GM12878 (cell line): ENCODE measurements at regions of chr15 and their contacts with region 1.

Region 1: DNA sequence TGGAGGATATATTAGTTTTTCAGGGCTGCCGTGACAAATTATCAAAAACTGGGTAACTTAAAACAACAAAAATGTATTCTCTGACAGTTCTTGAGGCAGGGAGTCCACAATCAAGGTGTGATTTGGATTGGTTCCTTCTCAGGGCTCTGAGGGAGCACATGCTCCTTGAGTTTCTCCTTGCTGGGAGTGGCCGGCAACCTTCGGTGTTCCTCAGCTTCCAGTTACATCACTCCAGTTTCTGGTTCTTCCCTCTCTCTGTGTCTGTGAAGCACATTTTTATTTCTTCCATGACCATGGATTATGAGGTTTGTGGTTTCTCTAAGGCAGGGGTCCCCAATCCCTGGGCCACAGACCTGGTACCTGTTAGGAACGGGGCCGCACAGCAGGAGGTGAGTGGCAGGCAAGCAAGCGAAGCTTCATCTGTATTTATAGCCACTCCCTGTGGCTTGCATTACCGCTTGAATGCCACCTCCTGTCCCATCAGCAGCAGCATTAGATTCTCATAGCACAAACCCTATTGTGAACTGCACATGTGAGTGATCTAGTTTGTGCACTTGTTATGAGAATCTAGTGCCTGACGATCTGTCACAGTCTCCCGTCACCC is 24.3 kb downstream of the LRRC28 start:
- DNase-seq: no peak
- ATAC-seq: peak; percentile 38
- H3K4me3 ChIP-seq: no peak overlapping the region
- H3K27ac ChIP-seq: no peak overlapping the region
- H3K4me1 ChIP-seq: no peaks in the 10 kb centered on the region
- H3K27me3 ChIP-seq: no peaks in the 10 kb centered on the region
- CTCF ChIP-seq: no peak
- EP300 ChIP-seq: no peak
- POLR2A ChIP-seq: no peak
- RAD21 ChIP-seq: no peak

Region 2: DNA sequence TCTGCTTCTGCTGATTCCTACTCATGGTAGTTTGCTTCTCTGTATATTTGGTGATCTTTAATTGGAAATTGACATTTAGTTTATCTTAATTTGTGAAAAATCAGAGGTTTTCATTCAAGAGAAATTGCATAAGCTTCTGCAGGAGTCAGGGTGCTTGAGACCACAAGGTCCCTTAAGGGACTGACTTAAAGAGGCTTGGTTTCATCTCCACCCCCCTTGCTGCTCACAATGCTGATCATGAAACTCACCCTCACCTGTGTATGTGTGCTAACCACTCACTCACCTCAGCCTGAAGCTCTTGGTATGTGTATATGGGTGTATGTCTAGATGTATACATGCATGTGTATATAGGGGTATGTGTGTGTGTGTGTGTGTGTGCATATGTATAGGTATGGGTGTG is 279.5 kb before region 1 on chr15:
- CTCF ChIA-PET with region 1: no interaction called
- POLR2A ChIA-PET with region 1: no interaction called
- RAD21 ChIA-PET with region 1: no interaction called
- SMC1A ChIA-PET with region 1: no interaction called
- in situ Hi-C with region 1: no loop called
- intact Hi-C with region 1: no loop called
- DNase-seq: no peak
- ATAC-seq: peak; percentile 79
- H3K4me3 ChIP-seq: no peak overlapping the region
- H3K27ac ChIP-seq: no peak overlapping the region
- H3K4me1 ChIP-seq: no peaks in the 10 kb centered on the region
- H3K27me3 ChIP-seq: no peaks in the 10 kb centered on the region
- CTCF ChIP-seq: no peak
- EP300 ChIP-seq: no peak
- POLR2A ChIP-seq: no peak
- RAD21 ChIP-seq: no peak

Region 3: DNA sequence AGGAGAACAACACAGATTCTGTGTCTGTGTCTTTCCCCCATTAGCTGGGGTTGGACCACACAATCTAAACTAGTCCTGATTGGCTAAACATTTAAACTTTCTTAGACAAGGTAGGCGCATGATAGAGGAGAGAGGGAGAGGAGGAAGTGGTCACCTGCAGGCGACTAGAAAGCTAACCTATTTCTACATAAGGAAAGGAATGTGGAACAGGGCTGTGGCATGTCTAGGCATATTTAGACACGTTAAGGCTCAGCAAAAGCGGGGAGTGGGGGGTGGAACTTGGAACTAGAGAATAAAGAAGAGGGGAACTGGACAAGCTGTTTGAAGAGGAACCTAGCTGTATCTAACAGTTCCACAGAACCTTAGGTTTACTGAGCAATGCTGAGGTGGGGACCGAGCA is 11.5 kb before region 1 on chr15:
- CTCF ChIA-PET with region 1: interaction called, 37 read pairs
- POLR2A ChIA-PET with region 1: no interaction called
- RAD21 ChIA-PET with region 1: interaction called, 9 read pairs
- SMC1A ChIA-PET with region 1: interaction called, 30 read pairs
- in situ Hi-C with region 1: no loop called
- intact Hi-C with region 1: no loop called
- DNase-seq: no peak
- ATAC-seq: no peak
- H3K4me3 ChIP-seq: no peak overlapping the region
- H3K27ac ChIP-seq: no peak overlapping the region
- H3K4me1 ChIP-seq: no peaks in the 10 kb centered on the region
- H3K27me3 ChIP-seq: no peaks in the 10 kb centered on the region
- CTCF ChIP-seq: no peak
- EP300 ChIP-seq: no peak
- POLR2A ChIP-seq: no peak
- RAD21 ChIP-seq: no peak

Region 4: DNA sequence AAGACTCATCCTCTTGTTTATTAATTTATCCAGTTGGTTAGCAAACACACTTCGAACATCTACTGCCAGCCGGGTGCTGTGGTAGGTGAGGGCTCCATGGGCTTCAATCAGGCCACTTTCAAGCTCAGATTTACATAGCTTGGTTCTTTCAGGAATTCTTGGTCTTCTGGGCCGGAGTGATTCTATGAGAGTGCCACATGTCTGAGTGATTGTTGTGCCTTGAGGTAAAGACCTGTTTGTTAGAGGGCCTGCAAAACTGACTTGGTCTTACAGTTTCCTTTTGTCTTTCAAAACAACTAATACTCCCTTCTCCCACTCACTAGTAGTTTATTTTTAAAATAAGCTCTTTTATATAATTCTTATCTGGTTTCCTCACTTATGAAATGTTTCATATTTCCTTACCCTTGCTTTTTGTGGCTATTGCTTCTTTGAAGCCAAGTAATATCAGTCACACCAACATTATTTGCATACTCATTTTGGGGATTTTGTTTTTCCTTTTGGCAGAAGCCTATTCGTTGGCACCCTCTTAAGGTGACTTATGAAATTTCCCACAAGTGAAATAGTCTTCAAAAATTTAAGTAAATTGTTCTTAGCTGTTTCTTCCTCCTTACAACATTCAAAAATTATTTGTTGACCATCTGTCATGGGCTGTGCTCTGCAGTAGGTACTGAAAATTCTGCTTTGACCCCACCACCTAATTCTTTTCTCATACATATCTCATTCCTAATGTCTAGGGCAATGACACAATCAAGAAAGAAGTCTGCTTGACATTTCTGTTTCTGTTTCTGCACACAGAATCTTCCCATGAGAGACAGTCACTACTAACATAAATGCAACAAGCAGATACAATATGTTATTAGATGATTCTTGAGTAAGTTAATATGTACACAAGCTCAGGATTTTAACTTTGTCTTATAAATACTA is 95.8 kb after region 1 on chr15:
- CTCF ChIA-PET with region 1: interaction called, 30 read pairs
- POLR2A ChIA-PET with region 1: no interaction called
- RAD21 ChIA-PET with region 1: interaction called, 21 read pairs
- SMC1A ChIA-PET with region 1: interaction called, 27 read pairs
- in situ Hi-C with region 1: no loop called
- intact Hi-C with region 1: no loop called
- DNase-seq: peak; percentile 63
- ATAC-seq: peak; percentile 92
- H3K4me3 ChIP-seq: no peak overlapping the region
- H3K27ac ChIP-seq: peak overlapping the region; percentile 71
- H3K4me1 ChIP-seq: peaks cover 14% of the 10 kb centered on the region
- H3K27me3 ChIP-seq: no peaks in the 10 kb centered on the region
- CTCF ChIP-seq: peak; percentile 12 to 52 (median 25); a peak in 3 of 6 replicates
- EP300 ChIP-seq: no peak
- POLR2A ChIP-seq: no peak
- RAD21 ChIP-seq: peak; percentile 77

Region 5: DNA sequence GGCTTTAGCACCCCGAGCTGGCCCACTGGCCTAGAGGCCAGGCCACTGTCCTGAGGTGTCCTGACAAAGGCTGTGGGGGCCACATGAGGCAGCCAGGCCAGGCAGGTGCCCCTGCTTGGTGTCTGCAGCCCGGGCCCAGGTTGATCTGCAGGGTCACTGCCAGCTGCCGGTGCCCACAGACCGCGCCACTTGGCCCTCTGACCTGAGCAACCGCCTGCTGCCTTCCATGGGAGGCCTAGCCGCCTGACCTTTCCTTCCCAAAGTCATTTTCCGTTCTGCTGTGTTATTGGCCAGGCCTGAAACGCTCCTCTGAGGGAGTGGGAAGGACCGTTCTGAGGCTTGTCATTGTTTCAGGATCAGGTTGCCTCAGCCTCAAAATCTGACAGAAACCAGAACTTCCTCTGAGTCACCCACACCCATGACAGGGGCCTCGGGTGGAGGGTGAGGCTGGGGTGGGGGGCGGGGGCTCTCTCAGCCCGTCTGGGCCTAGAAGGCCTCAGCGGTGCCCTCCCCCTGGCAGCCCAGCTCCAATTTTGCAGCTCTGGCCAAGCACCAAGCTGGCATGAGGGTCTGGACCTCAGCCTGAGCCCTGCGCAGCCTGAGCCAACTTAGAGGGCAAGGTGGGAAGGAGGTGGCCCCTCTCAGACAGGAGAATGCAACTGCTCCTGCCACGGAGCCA is 149.5 kb after region 1 on chr15:
- CTCF ChIA-PET with region 1: no interaction called
- POLR2A ChIA-PET with region 1: no interaction called
- RAD21 ChIA-PET with region 1: no interaction called
- SMC1A ChIA-PET with region 1: no interaction called
- in situ Hi-C with region 1: no loop called
- intact Hi-C with region 1: no loop called
- DNase-seq: no peak
- ATAC-seq: peak; percentile 89
- H3K4me3 ChIP-seq: no peak overlapping the region
- H3K27ac ChIP-seq: no peak overlapping the region
- H3K4me1 ChIP-seq: peaks cover 16% of the 10 kb centered on the region
- H3K27me3 ChIP-seq: no peaks in the 10 kb centered on the region; a peak in 2 of 4 replicates
- CTCF ChIP-seq: no peak
- EP300 ChIP-seq: no peak
- POLR2A ChIP-seq: no peak
- RAD21 ChIP-seq: no peak

Region 6: GRCh38 chr15:99492716-99493115 is 217.1 kb after region 1 on chr15:
- CTCF ChIA-PET with region 1: no interaction called
- POLR2A ChIA-PET with region 1: no interaction called
- RAD21 ChIA-PET with region 1: no interaction called
- SMC1A ChIA-PET with region 1: no interaction called
- in situ Hi-C with region 1: no loop called
- intact Hi-C with region 1: no loop called
- DNase-seq: no peak
- ATAC-seq: no peak
- H3K4me3 ChIP-seq: no peak overlapping the region
- H3K27ac ChIP-seq: no peak overlapping the region
- H3K4me1 ChIP-seq: peaks cover 10% of the 10 kb centered on the region
- H3K27me3 ChIP-seq: no peaks in the 10 kb centered on the region
- CTCF ChIP-seq: no peak
- EP300 ChIP-seq: no peak
- POLR2A ChIP-seq: no peak
- RAD21 ChIP-seq: no peak

Region 7: DNA sequence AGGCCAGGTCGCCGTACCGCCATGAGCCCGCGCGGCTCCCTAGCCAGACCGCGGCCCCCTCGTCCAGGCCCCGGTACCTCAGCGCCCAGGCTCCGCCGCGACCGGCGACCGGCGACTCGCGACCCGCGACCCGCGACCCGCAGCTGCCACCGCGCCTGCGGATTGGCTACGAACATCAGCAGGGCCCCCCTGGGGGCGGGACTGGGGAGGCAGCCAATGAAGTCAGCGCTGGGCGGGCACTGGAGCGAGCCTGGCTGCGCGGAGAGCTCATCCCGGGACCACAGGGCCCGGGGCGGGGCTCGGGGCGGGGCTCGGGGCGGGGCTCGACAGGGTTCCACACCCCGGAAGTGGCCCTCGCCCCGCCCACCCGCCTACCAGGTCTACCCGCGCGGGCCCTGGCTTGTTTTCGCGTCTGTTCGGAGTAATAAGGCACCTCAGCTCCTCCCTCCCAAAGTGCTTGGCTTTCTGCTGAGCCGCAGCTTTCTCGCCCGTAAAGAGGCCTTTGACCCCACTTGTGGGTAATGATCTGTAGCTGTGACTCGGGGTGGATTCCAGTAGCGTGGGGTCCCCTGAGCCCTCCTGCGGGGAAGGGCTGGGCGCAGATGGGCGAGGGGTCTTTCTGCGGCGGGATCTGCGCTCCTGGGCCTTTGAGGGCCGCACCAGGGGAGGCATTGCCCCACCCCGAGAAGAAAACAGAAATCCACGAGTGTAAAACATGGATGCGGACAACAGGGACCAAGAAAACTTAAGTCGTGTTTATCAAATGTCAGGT is 457.8 kb after region 1 on chr15 and contains the start of gene LYSMD4:
- CTCF ChIA-PET with region 1: interaction called, 42 read pairs
- POLR2A ChIA-PET with region 1: no interaction called
- RAD21 ChIA-PET with region 1: interaction called, 14 read pairs
- SMC1A ChIA-PET with region 1: interaction called, 4 read pairs
- in situ Hi-C with region 1: no loop called
- intact Hi-C with region 1: no loop called
- DNase-seq: peak; percentile 58
- ATAC-seq: peak; percentile 100
- H3K4me3 ChIP-seq: peak within 1 kb of the TSS; percentile 84
- H3K27ac ChIP-seq: peak within 1 kb of the TSS; percentile 67
- H3K4me1 ChIP-seq: no peaks in the 10 kb centered on the region
- H3K27me3 ChIP-seq: no peaks in the 10 kb centered on the region
- CTCF ChIP-seq: no peak
- EP300 ChIP-seq: no peak
- POLR2A ChIP-seq: peak; percentile 83
- RAD21 ChIP-seq: no peak
- polyA plus RNA-seq, gene LYSMD4: 1.8 to 5.2 TPM